CD8-positive, alpha-beta T cell (primary cell): ENCODE measurements at regions of chr9 and their contacts with region 1.

Region 1: GRCh38 chr9:137200311-137201204 is at the start of gene TPRN:
- DNase-seq: peak; percentile 96 to 99 (median 98)
- ATAC-seq: peak; percentile 96
- H3K4me3 ChIP-seq: peak within 1 kb of the TSS; percentile 64 to 88
- H3K4me3 Mint-ChIP-seq: peak within 1 kb of the TSS; percentile 83
- H3K27ac ChIP-seq: peak within 1 kb of the TSS; percentile 65 to 82
- H3K27ac Mint-ChIP-seq: peak within 1 kb of the TSS; percentile 57
- H3K4me1 ChIP-seq: peaks cover 22% of the 10 kb centered on the region
- H3K4me1 Mint-ChIP-seq: peaks cover 27% of the 10 kb centered on the region
- H3K27me3 ChIP-seq: no peaks in the 10 kb centered on the region
- H3K27me3 Mint-ChIP-seq: no peaks in the 10 kb centered on the region
- CTCF ChIP-seq: no peak
- total RNA-seq, gene TPRN: 4.1 to 4.4 TPM

Region 2: GRCh38 chr9:137046098-137046787 is 154.3 kb before region 1 on chr9 and contains the start of gene NPDC1:
- CTCF ChIA-PET with region 1: no interaction called
- POLR2A ChIA-PET with region 1: no interaction called
- intact Hi-C with region 1: no loop called
- DNase-seq: peak; percentile 64 to 87 (median 80)
- ATAC-seq: peak; percentile 87
- H3K4me3 ChIP-seq: peak within 1 kb of the TSS; percentile 28 to 45
- H3K4me3 Mint-ChIP-seq: peak within 1 kb of the TSS; percentile 68
- H3K27ac ChIP-seq: no peak within 1 kb of the TSS
- H3K27ac Mint-ChIP-seq: no peak within 1 kb of the TSS
- H3K4me1 ChIP-seq: peaks cover 29% of the 10 kb centered on the region
- H3K4me1 Mint-ChIP-seq: peaks cover 16% of the 10 kb centered on the region
- H3K27me3 ChIP-seq: peaks cover 44 to 67% of the 10 kb centered on the region in 2 experiments
- H3K27me3 Mint-ChIP-seq: peaks cover 26% of the 10 kb centered on the region
- CTCF ChIP-seq: peak; percentile 84
- total RNA-seq, gene NPDC1: 29.7 to 29.8 TPM

Region 3: DNA sequence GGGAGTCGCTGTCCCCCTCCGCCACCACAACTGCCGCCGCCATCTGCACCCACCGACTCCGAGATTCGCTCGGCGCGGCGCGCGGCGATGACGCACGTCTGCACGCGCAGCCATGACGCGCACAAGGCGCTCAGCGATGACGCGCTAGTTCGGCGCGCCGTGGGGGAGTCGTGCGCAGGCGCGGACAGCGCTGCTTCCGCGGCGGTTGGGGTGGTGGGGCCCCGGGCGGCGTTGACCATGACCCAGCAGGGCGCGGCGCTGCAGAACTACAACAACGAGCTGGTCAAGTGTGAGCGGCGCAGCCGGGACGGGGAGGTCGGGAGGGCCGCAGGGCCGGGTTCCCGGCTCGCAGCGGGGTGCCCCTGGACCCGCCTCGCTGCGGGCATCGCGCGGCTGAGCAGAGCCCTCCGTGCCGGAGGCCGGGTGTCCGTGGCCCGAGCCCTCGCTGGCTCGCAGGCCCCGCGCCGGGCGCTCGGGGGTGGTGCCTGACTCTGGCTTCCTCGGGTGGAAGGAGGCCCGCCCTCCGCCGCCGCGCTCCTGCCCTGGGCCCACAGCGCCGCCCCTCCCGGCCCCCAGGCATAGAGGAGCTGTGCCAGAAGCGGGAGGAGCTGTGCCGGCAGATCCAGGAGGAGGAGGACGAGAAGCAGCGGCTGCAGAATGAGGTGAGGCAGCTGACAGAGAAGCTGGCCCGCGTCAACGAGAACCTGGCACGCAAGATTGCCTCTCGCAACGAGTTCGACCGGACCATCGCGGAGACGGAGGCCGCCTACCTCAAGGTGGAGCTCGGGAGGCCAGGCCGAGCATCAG is 11.9 kb before region 1 on chr9 and contains the starts of genes ANAPC2 and SSNA1:
- CTCF ChIA-PET with region 1: interaction called, 13 read pairs
- POLR2A ChIA-PET with region 1: interaction called, 33 read pairs
- intact Hi-C with region 1: loop called (anchors 1 kb)
- DNase-seq: peak; percentile 84 to 98 (median 94)
- ATAC-seq: peak; percentile 80
- H3K4me3 ChIP-seq: peak within 1 kb of the TSS; percentile 92 to 100
- H3K4me3 Mint-ChIP-seq: peak within 1 kb of the TSS; percentile 93
- H3K27ac ChIP-seq: peak within 1 kb of the TSS; percentile 95 to 96
- H3K27ac Mint-ChIP-seq: peak within 1 kb of the TSS; percentile 96
- H3K4me1 ChIP-seq: peaks cover 34% of the 10 kb centered on the region
- H3K4me1 Mint-ChIP-seq: peaks cover 41% of the 10 kb centered on the region
- H3K27me3 ChIP-seq: no peaks in the 10 kb centered on the region
- H3K27me3 Mint-ChIP-seq: no peaks in the 10 kb centered on the region
- CTCF ChIP-seq: peak; percentile 56
- total RNA-seq, gene ANAPC2: 166 to 171 TPM
- total RNA-seq, gene SSNA1: 28.8 to 29.6 TPM

Region 4: GRCh38 chr9:137254624-137255447 is 54.3 kb after region 1 on chr9 and contains the start of gene NELFB:
- CTCF ChIA-PET with region 1: no interaction called
- POLR2A ChIA-PET with region 1: no interaction called
- intact Hi-C with region 1: loop called in 1 of 2 experiments (anchors 2 kb)
- DNase-seq: peak; percentile 91 to 99 (median 95)
- ATAC-seq: peak; percentile 92
- H3K4me3 ChIP-seq: peak within 1 kb of the TSS; percentile 81 to 83
- H3K4me3 Mint-ChIP-seq: peak within 1 kb of the TSS; percentile 88
- H3K27ac ChIP-seq: peak within 1 kb of the TSS; percentile 12 to 38
- H3K27ac Mint-ChIP-seq: peak within 1 kb of the TSS; percentile 73
- H3K4me1 ChIP-seq: peaks cover 18% of the 10 kb centered on the region
- H3K4me1 Mint-ChIP-seq: peaks cover 15% of the 10 kb centered on the region
- H3K27me3 ChIP-seq: no peaks in the 10 kb centered on the region
- H3K27me3 Mint-ChIP-seq: no peaks in the 10 kb centered on the region
- CTCF ChIP-seq: no peak
- total RNA-seq, gene NELFB: 17.1 to 17.6 TPM

Region 5: DNA sequence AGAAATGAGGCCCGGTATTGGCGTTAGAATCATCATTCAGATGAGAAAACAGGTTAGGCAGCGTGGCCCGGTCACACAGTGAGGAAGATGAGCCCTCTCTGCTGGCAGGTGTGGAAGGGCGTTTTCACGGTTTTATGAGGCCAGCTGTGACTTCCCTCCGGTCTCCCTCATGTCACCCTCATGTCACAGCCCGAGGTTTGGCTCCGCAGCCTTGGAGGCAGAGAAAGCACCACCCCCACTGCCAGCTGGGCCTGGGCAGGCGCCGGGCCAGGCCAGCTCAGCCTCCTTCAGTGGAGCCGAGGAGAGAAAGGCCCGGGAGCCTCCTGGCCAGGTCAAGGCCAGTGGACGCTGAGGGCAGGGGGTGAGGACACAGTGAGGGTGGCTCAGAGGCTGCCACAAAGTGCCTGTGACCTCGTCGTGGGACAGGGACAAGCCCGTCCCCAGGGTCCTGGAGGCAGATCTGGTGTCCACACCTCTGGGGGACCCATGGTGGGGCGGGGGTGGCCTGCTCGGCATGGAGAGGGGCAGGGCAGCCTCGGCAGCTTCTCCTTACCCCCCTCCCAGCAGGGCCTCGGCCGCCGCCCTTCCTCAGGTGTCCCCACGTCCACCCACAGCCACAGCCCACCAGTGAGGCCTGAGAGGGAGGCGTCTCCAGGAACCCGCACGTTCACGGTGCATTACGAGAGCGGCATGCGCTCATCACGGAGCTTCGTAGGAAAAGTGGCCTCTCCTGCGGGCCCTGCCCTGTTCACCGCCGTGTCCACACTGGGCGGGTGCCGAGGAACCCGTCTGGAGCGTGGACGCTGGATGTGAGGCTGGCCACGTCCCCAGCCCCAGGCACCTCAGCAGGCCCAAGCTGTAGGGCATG is 190.2 kb after region 1 on chr9:
- CTCF ChIA-PET with region 1: no interaction called
- POLR2A ChIA-PET with region 1: no interaction called
- intact Hi-C with region 1: no loop called
- DNase-seq: no peak
- ATAC-seq: no peak
- H3K4me3 ChIP-seq: no peak overlapping the region
- H3K4me3 Mint-ChIP-seq: no peak overlapping the region
- H3K27ac ChIP-seq: no peak overlapping the region
- H3K27ac Mint-ChIP-seq: no peak overlapping the region
- H3K4me1 ChIP-seq: peaks cover 15% of the 10 kb centered on the region
- H3K4me1 Mint-ChIP-seq: peaks cover 11% of the 10 kb centered on the region
- H3K27me3 ChIP-seq: no peaks in the 10 kb centered on the region
- H3K27me3 Mint-ChIP-seq: no peaks in the 10 kb centered on the region
- CTCF ChIP-seq: no peak

Region 6: GRCh38 chr9:137551651-137552384 is 351.3 kb after region 1 on chr9 and contains the start of gene MRPL41:
- CTCF ChIA-PET with region 1: no interaction called
- POLR2A ChIA-PET with region 1: no interaction called
- intact Hi-C with region 1: no loop called
- DNase-seq: peak; percentile 79 to 95 (median 86)
- ATAC-seq: peak; percentile 84
- H3K4me3 ChIP-seq: peak within 1 kb of the TSS; percentile 59 to 76
- H3K4me3 Mint-ChIP-seq: peak within 1 kb of the TSS; percentile 79
- H3K27ac ChIP-seq: peak within 1 kb of the TSS; percentile 64 to 70
- H3K27ac Mint-ChIP-seq: peak within 1 kb of the TSS; percentile 79
- H3K4me1 ChIP-seq: peaks cover 15% of the 10 kb centered on the region
- H3K4me1 Mint-ChIP-seq: peaks cover 15% of the 10 kb centered on the region
- H3K27me3 ChIP-seq: no peaks in the 10 kb centered on the region
- H3K27me3 Mint-ChIP-seq: no peaks in the 10 kb centered on the region
- CTCF ChIP-seq: no peak
- total RNA-seq, gene MRPL41: 31.8 to 33.5 TPM